Ascending aorta (tissue), 2 donors: ENCODE measurements at regions of chr4 and their contacts with region 1.

Region 1: GRCh38 chr4:158209825-158210807 is at the start of gene TMEM144:
- DNase-seq: peak; percentile 92 to 98
- H3K4me3 ChIP-seq: peak within 1 kb of the TSS; percentile 54
- H3K27ac ChIP-seq: peak within 1 kb of the TSS; percentile 94 to 96
- H3K4me1 ChIP-seq: peaks cover 0 to 28% of the 10 kb centered on the region in 2 donors
- H3K27me3 ChIP-seq: no peaks in the 10 kb centered on the region
- CTCF ChIP-seq: peak in 1 of 3 experiments; percentile 19
- total RNA-seq, gene TMEM144: 4.0 TPM

Region 2: GRCh38 chr4:158179465-158179864 is 30.7 kb before region 1 on chr4:
- intact Hi-C with region 1: loop called (anchors 2 kb)
- DNase-seq: no peak
- H3K4me3 ChIP-seq: peak overlapping the region in 1 of 2 donors; percentile 38
- H3K27ac ChIP-seq: peak overlapping the region; percentile 88 to 97
- H3K4me1 ChIP-seq: peaks cover 8 to 60% of the 10 kb centered on the region in 2 donors
- H3K27me3 ChIP-seq: no peaks in the 10 kb centered on the region
- CTCF ChIP-seq: no peak